Right ventricle myocardium inferior (tissue), 1 donor: ENCODE measurements at regions of chr15 and their contacts with region 1.

Region 1: DNA sequence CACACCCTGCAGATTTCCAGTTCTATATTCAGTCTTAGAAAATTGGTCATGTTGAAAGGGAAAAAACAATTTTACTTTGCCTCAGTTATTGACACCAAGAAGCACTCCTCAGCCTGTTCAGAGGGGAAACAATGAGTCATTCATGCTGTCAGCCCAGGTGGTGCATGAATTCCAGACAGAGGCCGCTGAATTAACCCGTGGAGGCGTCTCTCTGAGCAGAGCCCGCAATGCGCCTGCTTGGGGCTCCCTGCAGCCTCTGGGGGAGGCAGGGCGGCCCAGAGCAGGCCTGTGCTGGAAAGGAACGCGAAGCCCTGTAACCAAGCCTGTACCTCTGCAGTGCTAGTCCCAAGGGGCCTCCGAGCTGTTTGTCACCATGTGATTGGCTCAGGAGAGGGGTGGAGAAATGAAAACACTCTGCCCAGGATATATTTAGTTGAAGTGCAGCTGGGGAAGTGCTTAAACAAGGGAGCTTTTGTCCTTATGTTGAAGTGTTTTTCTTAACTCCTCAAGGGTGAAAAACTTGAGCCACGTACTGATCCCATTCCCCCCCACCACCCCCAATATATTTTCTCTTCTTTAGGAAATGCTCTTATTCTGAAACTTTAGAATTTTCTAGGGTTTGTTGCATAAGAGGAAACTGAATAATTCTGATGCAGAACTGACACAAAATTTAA is 68.3 kb upstream of the CHD2 start:
- DNase-seq: peak; percentile 94
- ATAC-seq: peak; percentile 99

Region 2: DNA sequence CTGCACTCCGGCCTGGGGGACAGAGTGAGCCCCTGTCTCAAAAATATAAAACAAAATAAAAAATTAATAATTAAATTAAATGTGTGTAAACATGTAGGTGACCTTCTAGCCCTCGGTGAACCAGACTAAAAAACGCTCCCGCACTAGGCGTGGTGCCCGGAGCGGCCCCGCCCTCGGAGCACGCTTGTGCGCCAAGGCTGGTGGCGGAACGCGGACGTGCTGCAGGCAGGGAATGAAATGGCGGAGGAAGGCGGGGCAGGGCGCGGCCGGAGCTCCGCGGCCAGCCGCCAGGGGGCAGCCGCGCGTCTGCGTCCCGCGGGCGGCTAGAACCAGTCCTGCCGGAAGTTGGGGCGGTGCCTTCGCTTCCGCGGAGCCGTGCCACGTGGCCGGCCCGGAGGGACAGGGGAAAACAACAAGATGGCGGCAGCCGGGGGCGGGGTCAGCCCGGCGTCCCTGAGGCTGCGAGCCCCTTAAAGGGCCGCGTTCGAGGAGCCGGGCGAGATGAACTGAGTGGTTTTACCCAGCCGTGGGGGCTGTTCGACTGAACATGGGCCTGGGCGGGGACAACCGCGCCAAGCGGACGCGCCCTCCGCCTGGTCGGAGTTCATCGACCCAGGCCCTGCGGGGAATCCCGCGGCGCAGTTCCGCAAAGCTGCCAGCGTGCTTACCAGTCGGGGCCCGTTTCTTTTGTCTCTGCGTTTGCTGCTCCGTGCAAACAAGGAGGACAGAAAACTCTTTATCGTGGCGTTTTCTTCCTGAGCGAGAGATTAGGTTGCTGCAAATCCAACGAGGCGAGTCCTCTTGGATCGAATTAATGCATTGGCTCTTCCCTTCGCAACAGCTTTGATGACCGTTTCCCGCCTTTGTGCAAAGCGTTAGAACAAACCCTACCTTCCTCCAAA is 22.6 kb before region 1 on chr15:
- intact Hi-C with region 1: loop called (anchors 1 kb)
- DNase-seq: peak; percentile 100
- ATAC-seq: peak; percentile 94

Region 3: DNA sequence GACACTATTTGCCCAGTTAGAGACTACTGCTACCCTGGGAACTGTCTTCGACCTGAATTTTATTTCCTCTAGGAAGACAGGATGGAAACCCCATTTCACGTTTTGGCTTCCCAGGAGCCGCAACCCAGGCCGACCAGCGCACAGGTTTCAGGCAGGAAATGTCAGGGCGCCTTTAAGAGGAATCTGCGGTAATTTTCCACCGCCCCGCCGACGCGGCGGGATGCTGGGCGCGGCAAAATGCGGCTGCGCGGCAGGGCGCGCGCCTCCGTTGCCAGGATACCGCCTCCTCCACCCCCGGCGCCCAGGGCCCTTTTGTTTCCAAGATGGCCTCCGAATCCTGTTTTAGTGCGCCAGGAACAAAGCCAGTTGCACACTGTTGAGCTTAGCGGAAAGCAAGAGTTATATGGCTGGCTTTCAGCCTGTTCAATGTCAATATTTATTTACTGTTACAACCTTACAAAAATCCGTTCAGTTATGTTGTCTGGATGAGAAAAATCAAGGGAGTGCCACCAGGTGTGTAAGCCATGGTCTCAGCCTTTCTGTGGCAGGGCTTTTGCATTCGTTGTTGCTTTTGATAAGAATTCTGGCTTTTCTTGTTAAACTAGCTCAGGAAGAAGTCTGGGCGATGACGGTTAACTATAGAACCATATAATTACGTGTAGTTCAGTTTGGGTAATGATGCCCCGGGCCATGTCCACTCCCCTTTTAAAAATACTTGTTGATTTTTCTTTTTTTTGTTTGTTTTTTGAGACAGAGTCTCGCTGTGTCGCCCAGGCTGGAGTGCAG is 11.4 kb before region 1 on chr15:
- intact Hi-C with region 1: loop called (anchors 1 kb)
- DNase-seq: peak; percentile 94
- ATAC-seq: peak; percentile 97

Region 4: DNA sequence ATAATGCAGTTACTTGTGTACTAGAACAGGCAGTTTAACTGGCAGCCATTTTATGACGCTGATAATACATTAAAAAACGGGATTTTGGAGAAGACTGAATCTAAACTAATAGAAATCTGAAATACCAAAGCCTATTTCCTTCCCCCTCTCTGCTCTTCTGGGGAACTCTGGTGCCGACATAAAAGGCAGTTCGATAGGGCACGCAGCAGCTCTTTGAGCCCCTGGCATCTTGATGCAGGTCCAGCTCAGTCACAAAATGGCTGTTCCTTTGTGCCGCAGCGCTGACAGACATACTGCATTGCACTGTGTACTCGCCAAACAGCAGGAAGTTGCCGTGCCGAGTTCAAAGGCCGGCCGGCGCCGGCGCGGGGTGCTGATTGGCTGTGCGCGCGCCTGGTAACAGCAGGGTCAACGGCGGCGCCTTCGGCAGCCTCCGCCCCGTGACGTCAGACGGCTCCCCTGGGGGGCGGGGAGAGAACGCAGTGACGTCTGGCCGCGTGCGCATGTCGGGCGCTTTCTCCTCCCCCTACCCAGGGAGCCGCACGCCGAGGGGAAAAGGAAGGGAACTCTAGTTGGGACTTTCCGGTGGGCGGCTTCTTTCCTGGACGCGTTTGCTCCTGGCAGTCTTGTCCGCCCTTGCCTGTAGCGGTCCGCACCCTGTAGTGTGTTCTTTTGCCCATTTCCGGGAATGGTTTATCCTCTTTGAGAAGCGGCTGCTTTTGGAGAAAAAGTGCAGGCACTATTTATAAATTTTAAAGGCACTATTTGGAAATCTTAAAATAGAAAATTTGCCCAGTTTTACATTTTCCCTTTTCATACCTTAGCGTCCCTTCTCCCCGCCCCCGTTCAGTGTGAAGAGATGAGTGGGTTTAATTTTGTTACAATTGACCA is 72.4 kb after region 1 on chr15:
- intact Hi-C with region 1: loop called (anchors 5 kb)
- DNase-seq: peak; percentile 99
- ATAC-seq: peak; percentile 96